ENCODE measurements at regions of chr14 and their contacts with region 1.

Region 1: DNA sequence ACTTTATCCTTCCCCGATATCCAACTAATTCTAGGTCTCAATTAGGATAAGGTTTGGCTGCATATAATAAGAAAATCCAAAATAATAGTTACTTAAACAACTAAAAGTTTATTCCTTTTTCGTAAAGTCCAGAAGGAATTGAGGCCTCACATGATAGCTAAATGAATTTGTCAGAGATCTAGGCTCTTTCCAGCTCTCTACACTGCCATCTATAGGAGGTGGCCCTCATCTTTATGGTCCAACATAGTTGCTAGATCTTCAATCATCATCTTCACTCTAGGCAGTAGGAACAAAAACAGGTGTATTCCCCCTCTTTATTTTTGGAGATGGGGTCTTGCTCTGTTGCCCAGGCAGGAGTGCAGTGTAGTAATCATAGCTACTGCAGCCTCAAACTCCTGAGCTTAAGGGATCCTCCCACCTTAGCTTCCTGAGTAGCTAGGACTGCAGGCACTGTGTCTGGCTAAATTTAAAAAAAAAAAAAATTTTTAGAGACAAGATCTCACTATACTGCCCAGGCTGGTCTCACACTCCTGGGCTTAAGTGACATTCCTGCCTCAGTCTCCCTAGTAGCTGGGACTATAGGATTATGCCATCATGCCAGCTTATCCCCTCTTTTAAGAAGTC is 46.5 kb upstream of the SAV1 start:
- DNase-seq: no peak
- ATAC-seq: peak; percentile 68
- H3K4me3 Mint-ChIP-seq: no peak overlapping the region
- H3K27ac Mint-ChIP-seq: no peak overlapping the region
- H3K4me1 Mint-ChIP-seq: no peaks in the 10 kb centered on the region
- H3K27me3 Mint-ChIP-seq: no peaks in the 10 kb centered on the region
- CTCF ChIP-seq: no peak

Region 2: GRCh38 chr14:50342221-50343078 is 372.1 kb before region 1 on chr14:
- CTCF ChIA-PET with region 1: no interaction called
- POLR2A ChIA-PET with region 1: no interaction called
- intact Hi-C with region 1: loop called (anchors 1 kb)
- DNase-seq: no peak
- ATAC-seq: peak; percentile 36
- H3K4me3 Mint-ChIP-seq: no peak overlapping the region
- H3K27ac Mint-ChIP-seq: peak overlapping the region; percentile 19
- H3K4me1 Mint-ChIP-seq: peaks cover 21% of the 10 kb centered on the region
- H3K27me3 Mint-ChIP-seq: no peaks in the 10 kb centered on the region
- CTCF ChIP-seq: no peak

Region 3: GRCh38 chr14:50542941-50543418 is 171.6 kb before region 1 on chr14:
- CTCF ChIA-PET with region 1: interaction called, 11 read pairs
- POLR2A ChIA-PET with region 1: interaction called, 6 read pairs
- intact Hi-C with region 1: loop called (anchors 1 kb)
- DNase-seq: no peak
- ATAC-seq: peak; percentile 71
- H3K4me3 Mint-ChIP-seq: no peak overlapping the region
- H3K27ac Mint-ChIP-seq: no peak overlapping the region
- H3K4me1 Mint-ChIP-seq: peaks cover 8% of the 10 kb centered on the region
- H3K27me3 Mint-ChIP-seq: no peaks in the 10 kb centered on the region
- CTCF ChIP-seq: no peak

Region 4: GRCh38 chr14:50599700-50600444 is 114.7 kb before region 1 on chr14:
- CTCF ChIA-PET with region 1: interaction called, 23 read pairs
- POLR2A ChIA-PET with region 1: no interaction called
- intact Hi-C with region 1: loop called (anchors 1 kb)
- DNase-seq: no peak
- ATAC-seq: no peak
- H3K4me3 Mint-ChIP-seq: no peak overlapping the region
- H3K27ac Mint-ChIP-seq: no peak overlapping the region
- H3K4me1 Mint-ChIP-seq: no peaks in the 10 kb centered on the region
- H3K27me3 Mint-ChIP-seq: no peaks in the 10 kb centered on the region
- CTCF ChIP-seq: no peak

Region 5: GRCh38 chr14:50619556-50620141 is 94.9 kb before region 1 on chr14:
- CTCF ChIA-PET with region 1: interaction called, 52 read pairs
- POLR2A ChIA-PET with region 1: no interaction called
- intact Hi-C with region 1: loop called (anchors 1 kb)
- DNase-seq: no peak
- ATAC-seq: peak; percentile 68
- H3K4me3 Mint-ChIP-seq: no peak overlapping the region
- H3K27ac Mint-ChIP-seq: no peak overlapping the region
- H3K4me1 Mint-ChIP-seq: peaks cover 5% of the 10 kb centered on the region
- H3K27me3 Mint-ChIP-seq: no peaks in the 10 kb centered on the region
- CTCF ChIP-seq: peak; percentile 30

Region 6: GRCh38 chr14:50647282-50647681 is 67.3 kb before region 1 on chr14:
- CTCF ChIA-PET with region 1: interaction called, 5 read pairs
- POLR2A ChIA-PET with region 1: no interaction called
- intact Hi-C with region 1: loop called (anchors 2 kb)
- DNase-seq: no peak
- ATAC-seq: peak; percentile 96
- H3K4me3 Mint-ChIP-seq: peak overlapping the region; percentile 70
- H3K27ac Mint-ChIP-seq: peak overlapping the region; percentile 75
- H3K4me1 Mint-ChIP-seq: peaks cover 60% of the 10 kb centered on the region
- H3K27me3 Mint-ChIP-seq: no peaks in the 10 kb centered on the region
- CTCF ChIP-seq: no peak

Region 7: DNA sequence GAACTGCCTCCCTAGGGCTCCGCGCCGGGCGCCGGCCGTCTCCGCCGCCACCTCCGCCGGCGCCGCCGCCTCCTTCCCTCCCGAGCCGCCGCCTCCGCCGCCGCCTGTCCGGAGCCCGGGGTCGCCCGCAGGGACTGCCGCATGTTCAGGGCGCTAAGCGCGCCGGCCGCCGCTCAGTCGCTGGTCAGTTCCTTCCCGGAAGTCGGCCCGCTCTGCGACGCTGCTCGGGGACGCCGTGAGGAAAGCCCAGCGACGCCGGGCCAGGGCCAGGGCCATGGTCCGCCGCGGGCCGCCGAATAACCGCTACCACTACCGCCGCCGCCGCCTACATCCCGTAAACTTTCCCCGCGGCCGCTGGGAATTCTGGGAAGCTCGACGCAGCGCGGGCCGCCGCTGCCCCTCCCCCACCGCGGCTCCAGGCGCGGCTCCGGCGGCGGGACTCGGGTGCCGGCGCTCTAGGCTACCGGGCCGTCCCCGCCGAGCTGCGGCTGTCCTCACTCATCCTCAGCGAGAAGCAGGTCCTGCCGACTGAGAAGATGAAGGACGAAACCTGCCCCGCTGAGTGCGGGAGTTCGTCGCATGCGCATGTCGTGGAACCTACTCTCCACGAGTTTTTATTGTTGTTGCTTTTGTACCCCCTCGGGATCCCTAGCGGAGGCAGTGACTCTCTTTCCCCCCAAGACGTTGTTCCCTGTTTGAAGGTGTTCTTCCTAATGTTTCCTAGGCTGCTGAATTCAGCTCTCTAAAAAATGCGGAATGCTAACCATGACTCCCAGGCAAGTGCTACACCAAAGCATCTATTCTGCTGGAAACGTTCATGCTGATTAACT is 46.4 kb before region 1 on chr14 and contains the start of gene SAV1:
- CTCF ChIA-PET with region 1: interaction called, 9 read pairs
- POLR2A ChIA-PET with region 1: interaction called, 6 read pairs
- intact Hi-C with region 1: loop called (anchors 2 kb)
- DNase-seq: peak; percentile 63
- ATAC-seq: peak; percentile 65
- H3K4me3 Mint-ChIP-seq: no peak within 1 kb of the TSS
- H3K27ac Mint-ChIP-seq: no peak within 1 kb of the TSS
- H3K4me1 Mint-ChIP-seq: peaks cover 32% of the 10 kb centered on the region
- H3K27me3 Mint-ChIP-seq: no peaks in the 10 kb centered on the region
- CTCF ChIP-seq: no peak
- total RNA-seq, gene SAV1: 31.0 and 33.3 TPM in 2 replicates

Measured in activated B cell treated with CpG ODN at 0.5 μM for 24 hours (primary cell).